Calu3 (cell line): ENCODE measurements at regions of chr5 and their contacts with region 1.

Region 1: DNA sequence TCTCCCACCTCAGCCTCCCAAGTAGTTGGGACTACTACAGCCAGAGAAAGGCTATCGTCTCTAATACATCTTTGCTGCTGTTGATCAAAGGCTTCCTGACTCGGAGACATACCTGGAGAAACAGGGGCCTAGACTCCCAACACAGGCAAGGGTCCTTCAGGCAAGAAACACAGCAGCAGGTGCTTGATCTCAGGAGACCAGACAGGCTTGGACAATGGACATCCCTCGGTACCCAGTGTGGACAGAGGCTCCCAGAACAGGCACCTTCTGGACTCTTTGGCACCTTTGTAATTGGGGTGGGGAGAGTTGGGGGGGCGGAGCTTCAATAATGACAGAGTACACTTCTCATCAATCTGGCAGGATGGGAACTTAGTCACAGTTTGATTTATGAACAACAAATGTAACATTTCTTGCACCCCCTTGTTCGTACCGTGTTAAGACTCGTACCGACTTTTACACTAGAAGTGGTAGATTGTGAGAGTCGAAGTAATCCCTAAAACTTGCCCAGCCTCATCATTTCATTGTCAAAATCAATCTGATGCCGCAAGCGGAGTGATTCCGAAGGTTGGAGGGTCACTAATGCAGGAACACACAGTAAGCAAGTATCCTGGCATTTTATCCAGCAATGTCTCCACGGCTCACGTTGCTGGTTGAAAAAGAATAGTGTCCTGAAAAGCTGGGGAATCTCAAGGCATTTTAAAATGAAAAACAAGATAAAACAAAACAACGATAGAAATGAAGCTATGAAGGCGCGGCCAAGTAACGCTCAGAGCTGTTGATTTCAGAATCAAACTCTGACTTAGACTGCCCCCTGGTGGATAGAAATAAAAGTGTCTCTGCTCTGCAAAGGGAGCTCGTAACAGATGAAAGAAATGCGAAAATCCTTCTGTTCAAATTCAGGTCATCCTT is 46.4 kb upstream of the STK32A start:
- DNase-seq: peak; percentile 78
- H3K4me3 Mint-ChIP-seq: no peak overlapping the region
- H3K27ac Mint-ChIP-seq: no peak overlapping the region
- H3K4me1 Mint-ChIP-seq: peaks cover 16% of the 10 kb centered on the region
- H3K27me3 Mint-ChIP-seq: no peaks in the 10 kb centered on the region
- CTCF ChIP-seq: peak; percentile 79

Region 2: GRCh38 chr5:146541958-146542849 is 646.2 kb before region 1 on chr5:
- CTCF ChIA-PET with region 1: interaction called, 23 read pairs
- intact Hi-C with region 1: no loop called
- DNase-seq: peak; percentile 94
- H3K4me3 Mint-ChIP-seq: no peak overlapping the region
- H3K27ac Mint-ChIP-seq: no peak overlapping the region
- H3K4me1 Mint-ChIP-seq: peaks cover 20% of the 10 kb centered on the region
- H3K27me3 Mint-ChIP-seq: no peaks in the 10 kb centered on the region
- CTCF ChIP-seq: peak; percentile 97

Region 3: DNA sequence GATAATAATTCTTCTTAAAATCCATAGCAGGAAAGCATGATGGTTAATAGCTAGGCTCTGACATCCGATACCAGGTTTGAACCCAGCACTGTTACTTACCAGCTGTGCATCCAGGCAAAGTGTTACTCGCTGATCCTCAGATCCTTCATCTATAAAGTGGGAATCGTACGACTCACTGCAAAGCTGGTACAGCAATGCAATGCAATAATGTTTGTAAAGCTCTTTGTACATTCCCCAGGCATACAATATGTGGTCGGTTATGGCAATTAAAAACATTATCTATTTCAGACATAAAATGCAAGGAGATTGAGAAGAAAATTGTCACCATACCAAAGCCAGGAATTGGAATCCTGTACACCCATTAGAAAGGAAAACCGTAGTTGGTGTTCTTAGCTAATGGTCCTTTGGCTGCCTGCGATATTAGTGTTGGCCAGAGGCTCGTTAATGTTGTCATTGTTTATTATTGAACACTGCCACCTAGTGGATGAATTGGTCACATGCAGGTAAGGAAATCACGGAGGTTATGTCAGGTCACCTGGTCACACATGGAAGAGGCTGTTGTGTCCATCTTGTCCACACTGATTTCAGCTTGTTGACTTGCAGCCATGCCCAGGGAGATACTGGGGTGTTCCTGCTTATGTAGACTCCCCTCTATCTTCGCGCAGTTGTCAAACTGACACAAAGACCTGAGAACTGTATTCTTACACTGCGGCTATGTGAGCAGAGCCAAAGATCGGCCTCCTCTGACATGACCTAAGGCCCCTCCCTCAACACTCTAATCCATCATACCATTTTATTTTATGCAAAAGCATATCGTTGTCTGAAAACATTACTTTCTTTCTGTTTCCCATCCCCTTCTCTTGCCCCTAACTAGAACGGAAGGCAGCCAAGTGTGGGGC is 222.4 kb before region 1 on chr5:
- CTCF ChIA-PET with region 1: interaction called, 36 read pairs
- intact Hi-C with region 1: loop called (anchors 2 kb)
- DNase-seq: peak; percentile 71
- H3K4me3 Mint-ChIP-seq: no peak overlapping the region
- H3K27ac Mint-ChIP-seq: no peak overlapping the region
- H3K4me1 Mint-ChIP-seq: peaks cover 9% of the 10 kb centered on the region
- H3K27me3 Mint-ChIP-seq: no peaks in the 10 kb centered on the region
- CTCF ChIP-seq: peak; percentile 78

Region 4: DNA sequence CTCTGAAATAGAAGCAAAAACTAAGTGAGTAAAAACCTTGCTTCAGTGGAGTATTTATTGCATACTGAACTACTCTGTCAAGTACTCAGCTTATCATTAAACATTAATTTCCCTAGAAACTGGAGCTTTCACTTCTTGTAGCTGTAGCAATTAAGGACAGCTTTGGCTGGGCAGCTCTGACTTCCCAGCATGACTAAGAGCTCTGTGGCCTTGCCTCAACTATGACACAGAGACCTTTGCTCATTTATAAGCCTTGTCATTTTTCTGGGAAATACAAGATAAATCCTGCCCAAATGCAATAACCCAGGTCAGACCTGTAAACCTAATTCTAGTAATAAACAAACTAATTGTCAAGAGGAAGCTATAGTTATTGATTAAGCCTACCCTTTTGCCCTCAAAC is 19.1 kb before region 1 on chr5:
- CTCF ChIA-PET with region 1: interaction called, 23 read pairs
- intact Hi-C with region 1: no loop called
- DNase-seq: peak; percentile 47
- H3K4me3 Mint-ChIP-seq: no peak overlapping the region
- H3K27ac Mint-ChIP-seq: peak overlapping the region; percentile 94
- H3K4me1 Mint-ChIP-seq: peaks cover 44% of the 10 kb centered on the region
- H3K27me3 Mint-ChIP-seq: no peaks in the 10 kb centered on the region
- CTCF ChIP-seq: no peak

Region 5: GRCh38 chr5:147369742-147370374 is 181.4 kb after region 1 on chr5:
- CTCF ChIA-PET with region 1: interaction called, 14 read pairs
- intact Hi-C with region 1: no loop called
- DNase-seq: no peak
- H3K4me3 Mint-ChIP-seq: no peak overlapping the region
- H3K27ac Mint-ChIP-seq: no peak overlapping the region
- H3K4me1 Mint-ChIP-seq: peaks cover 9% of the 10 kb centered on the region
- H3K27me3 Mint-ChIP-seq: no peaks in the 10 kb centered on the region
- CTCF ChIP-seq: peak; percentile 68